PC-3 (cell line): ENCODE measurements at regions of chr1 and their contacts with region 1.

Region 1: GRCh38 chr1:75203415-75204277 is 69.5 kb downstream of the LHX8 start:
- DNase-seq: peak; percentile 65
- ATAC-seq: peak; percentile 73
- H3K4me3 ChIP-seq: no peak overlapping the region
- H3K27ac ChIP-seq: no peak overlapping the region
- H3K4me1 ChIP-seq: no peaks in the 10 kb centered on the region
- H3K27me3 ChIP-seq: peaks cover 46% of the 10 kb centered on the region
- CTCF ChIP-seq: peak; percentile 95

Region 2: DNA sequence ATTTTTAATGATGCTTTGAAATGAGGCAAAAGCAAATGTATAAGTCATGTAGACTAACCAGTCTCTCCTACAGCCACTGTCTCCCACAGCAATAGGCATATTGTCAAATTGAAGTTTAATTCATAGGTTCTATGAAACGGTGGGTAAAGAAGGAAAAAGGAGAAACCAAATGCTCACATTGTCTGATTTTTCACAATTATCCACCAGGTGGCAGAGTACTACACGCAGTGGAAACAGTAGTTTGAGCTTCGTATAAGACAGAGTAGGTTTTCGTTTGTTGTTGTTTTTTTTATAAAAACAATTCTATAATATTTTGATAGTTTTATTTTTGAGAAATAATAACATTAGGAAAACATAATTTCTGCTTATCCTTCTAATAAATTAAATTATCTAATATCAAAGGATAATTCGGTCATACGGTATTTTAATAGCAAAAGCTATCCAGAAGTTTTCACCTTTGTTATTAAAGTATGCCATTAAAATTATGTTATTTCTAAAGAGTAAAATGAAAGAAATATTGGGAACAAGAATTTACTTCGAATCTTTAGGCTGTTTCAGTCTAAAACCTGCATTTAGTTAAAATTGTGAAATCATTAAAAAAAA is 431.6 kb before region 1 on chr1:
- CTCF ChIA-PET with region 1: interaction called, 8 read pairs
- POLR2A ChIA-PET with region 1: no interaction called
- intact Hi-C with region 1: loop called (anchors 1 kb)
- DNase-seq: peak; percentile 83
- ATAC-seq: peak; percentile 81
- H3K4me3 ChIP-seq: no peak overlapping the region
- H3K27ac ChIP-seq: no peak overlapping the region
- H3K4me1 ChIP-seq: no peaks in the 10 kb centered on the region
- H3K27me3 ChIP-seq: peaks cover 42% of the 10 kb centered on the region
- CTCF ChIP-seq: peak; percentile 73